Activated CD4-positive, alpha-beta memory T cell treated with anti-CD3 and anti-CD28 coated beads for 36 hours (primary cell): ENCODE measurements at regions of chr6 and their contacts with region 1.

Region 1: DNA sequence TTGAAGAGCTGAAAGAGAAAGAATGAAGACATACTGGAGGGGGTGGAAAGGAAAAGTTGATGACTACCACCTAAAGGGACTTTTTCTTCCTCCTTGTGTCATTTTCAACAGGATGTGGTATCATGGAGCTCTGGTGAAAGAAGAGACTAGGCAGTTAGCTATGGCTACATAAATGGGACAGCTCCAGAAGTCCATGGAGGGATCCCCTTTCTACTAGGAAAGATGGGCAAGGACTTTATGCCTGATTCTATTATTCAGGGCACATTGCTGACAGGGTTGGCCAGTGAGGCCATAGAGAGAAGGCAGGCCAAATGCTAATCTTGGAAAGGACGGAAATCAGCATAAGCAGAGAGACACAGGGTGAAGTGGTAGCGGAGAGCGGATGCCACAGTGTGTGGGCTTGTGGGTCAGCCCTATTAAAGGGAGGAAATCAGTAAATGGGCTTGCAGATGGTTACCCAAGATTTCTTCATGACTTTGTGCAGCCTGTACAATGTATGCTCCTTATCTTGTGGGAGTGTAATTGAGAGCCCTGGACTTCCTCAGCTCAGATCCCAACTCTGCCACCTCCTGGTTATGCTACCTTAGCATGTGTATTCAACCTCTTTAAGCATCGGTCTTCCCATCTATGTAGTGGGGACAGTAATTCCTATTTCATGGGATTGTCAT is 77.4 kb upstream of the TMEM170B start:
- DNase-seq: peak; percentile 23
- H3K4me3 Mint-ChIP-seq: peak overlapping the region; percentile 57
- H3K27ac Mint-ChIP-seq: peak overlapping the region; percentile 90
- H3K4me1 Mint-ChIP-seq: peaks cover 31% of the 10 kb centered on the region
- H3K27me3 Mint-ChIP-seq: no peaks in the 10 kb centered on the region

Region 2: GRCh38 chr6:11317885-11318771 is 142.0 kb before region 1 on chr6:
- CTCF ChIA-PET with region 1: interaction called, 5 read pairs
- POLR2A ChIA-PET with region 1: interaction called, 3 read pairs
- intact Hi-C with region 1: loop called (anchors 1 kb)
- DNase-seq: peak; percentile 88
- H3K4me3 Mint-ChIP-seq: peak overlapping the region; percentile 14
- H3K27ac Mint-ChIP-seq: peak overlapping the region; percentile 92
- H3K4me1 Mint-ChIP-seq: peaks cover 63% of the 10 kb centered on the region
- H3K27me3 Mint-ChIP-seq: no peaks in the 10 kb centered on the region

Region 3: DNA sequence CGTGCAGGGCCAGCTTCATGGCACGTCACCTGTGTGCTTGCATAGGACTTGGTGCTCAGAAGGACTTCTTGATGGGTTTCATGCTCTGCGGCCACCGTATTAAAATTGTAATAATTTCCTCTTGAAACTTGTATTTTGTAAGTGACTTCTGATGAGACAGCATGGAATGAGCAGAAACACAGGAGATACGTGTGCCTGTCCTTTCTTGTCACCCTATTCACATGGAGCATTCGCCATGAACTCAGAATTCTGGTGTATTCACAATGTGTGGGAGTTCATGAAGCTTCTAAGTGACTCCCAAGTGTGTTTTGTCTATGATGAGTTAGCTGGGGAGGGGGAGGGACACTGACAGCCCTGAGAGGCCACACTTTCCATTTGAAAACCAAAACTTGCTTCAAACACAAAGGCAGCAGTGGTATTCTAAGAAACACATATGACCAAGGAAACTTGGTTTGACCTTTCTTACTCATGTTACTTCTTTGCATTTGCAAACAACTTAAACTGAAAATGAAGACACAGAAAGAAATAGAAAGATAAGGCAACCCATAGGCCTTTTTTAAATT is 135.6 kb before region 1 on chr6:
- CTCF ChIA-PET with region 1: no interaction called
- POLR2A ChIA-PET with region 1: no interaction called
- intact Hi-C with region 1: loop called (anchors 2 kb)
- DNase-seq: peak; percentile 83
- H3K4me3 Mint-ChIP-seq: peak overlapping the region; percentile 57
- H3K27ac Mint-ChIP-seq: peak overlapping the region; percentile 85
- H3K4me1 Mint-ChIP-seq: peaks cover 73% of the 10 kb centered on the region
- H3K27me3 Mint-ChIP-seq: no peaks in the 10 kb centered on the region

Region 4: GRCh38 chr6:11381801-11382513 is 78.2 kb before region 1 on chr6:
- CTCF ChIA-PET with region 1: interaction called, 4 read pairs
- POLR2A ChIA-PET with region 1: interaction called, 19 read pairs
- intact Hi-C with region 1: loop called (anchors 1 kb)
- DNase-seq: peak; percentile 82
- H3K4me3 Mint-ChIP-seq: peak overlapping the region; percentile 85
- H3K27ac Mint-ChIP-seq: peak overlapping the region; percentile 95
- H3K4me1 Mint-ChIP-seq: peaks cover 58% of the 10 kb centered on the region
- H3K27me3 Mint-ChIP-seq: no peaks in the 10 kb centered on the region

Region 5: GRCh38 chr6:11447265-11447664 is 12.9 kb before region 1 on chr6:
- CTCF ChIA-PET with region 1: no interaction called
- POLR2A ChIA-PET with region 1: no interaction called
- intact Hi-C with region 1: loop called (anchors 1 kb)
- DNase-seq: no peak
- H3K4me3 Mint-ChIP-seq: no peak overlapping the region
- H3K27ac Mint-ChIP-seq: no peak overlapping the region
- H3K4me1 Mint-ChIP-seq: peaks cover 23% of the 10 kb centered on the region
- H3K27me3 Mint-ChIP-seq: peaks cover 1% of the 10 kb centered on the region

Region 6: DNA sequence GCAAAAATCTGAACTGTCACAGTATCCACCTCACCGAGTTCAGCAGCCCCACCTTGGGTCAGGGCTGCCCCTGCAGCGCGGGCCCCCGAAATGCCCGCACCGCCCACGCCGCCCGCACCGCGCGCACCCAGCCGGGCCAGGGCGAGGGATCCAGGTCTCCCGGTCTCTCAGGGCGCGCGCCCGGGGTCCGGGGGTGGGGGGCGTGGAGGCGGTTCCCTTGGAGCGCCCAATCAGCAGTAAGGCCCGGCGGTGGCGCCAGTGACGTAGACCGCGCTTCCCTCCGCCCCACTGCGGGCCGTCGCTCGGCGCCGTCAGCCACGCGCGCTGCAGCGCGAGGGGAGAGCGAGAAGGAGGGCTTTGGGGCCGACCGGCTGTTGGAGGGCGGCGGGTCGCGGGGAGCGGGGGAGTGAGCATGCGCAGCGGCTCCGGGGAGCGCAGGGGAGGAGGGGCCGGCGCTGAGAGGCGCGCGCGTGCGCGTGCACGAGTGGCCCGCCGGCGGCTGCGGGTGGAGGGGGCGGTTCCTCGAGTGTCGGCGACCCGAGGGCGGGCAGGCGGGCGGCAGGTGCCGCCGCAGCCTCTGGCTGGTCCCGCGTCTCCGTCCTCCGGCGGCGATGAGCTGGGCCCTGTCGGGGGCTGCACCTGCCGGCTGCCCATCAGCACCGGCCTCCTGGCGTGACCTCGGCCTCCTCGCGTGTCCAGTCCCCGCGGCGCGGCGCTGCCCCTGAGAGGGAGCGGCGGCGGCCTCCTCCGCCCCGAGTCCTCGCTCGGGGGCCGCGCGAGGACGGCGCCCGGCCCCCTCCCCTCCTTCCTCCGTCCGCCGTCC is 77.3 kb after region 1 on chr6 and contains the start of gene TMEM170B:
- CTCF ChIA-PET with region 1: no interaction called
- POLR2A ChIA-PET with region 1: no interaction called
- intact Hi-C with region 1: loop called (anchors 2 kb)
- DNase-seq: peak; percentile 94
- H3K4me3 Mint-ChIP-seq: peak within 1 kb of the TSS; percentile 73
- H3K27ac Mint-ChIP-seq: no peak within 1 kb of the TSS
- H3K4me1 Mint-ChIP-seq: peaks cover 9% of the 10 kb centered on the region
- H3K27me3 Mint-ChIP-seq: peaks cover 14% of the 10 kb centered on the region
- total RNA-seq, gene TMEM170B: 0.83 to 1.1 TPM